ENCODE measurements at regions of chr2 and their contacts with region 1.

Region 1: GRCh38 chr2:45711224-45711623 is 59.7 kb downstream of the PRKCE start:
- DNase-seq: no peak
- ATAC-seq: no peak
- H3K4me3 ChIP-seq: no peak overlapping the region
- H3K4me3 Mint-ChIP-seq: no peak overlapping the region
- H3K27ac ChIP-seq: no peak overlapping the region
- H3K27ac Mint-ChIP-seq: no peak overlapping the region
- H3K4me1 ChIP-seq: no peaks in the 10 kb centered on the region
- H3K4me1 Mint-ChIP-seq: peaks cover 0 to 12% (median 10%) of the 10 kb centered on the region in 3 donors
- H3K27me3 ChIP-seq: no peaks in the 10 kb centered on the region
- H3K27me3 Mint-ChIP-seq: no peaks in the 10 kb centered on the region

Region 2: DNA sequence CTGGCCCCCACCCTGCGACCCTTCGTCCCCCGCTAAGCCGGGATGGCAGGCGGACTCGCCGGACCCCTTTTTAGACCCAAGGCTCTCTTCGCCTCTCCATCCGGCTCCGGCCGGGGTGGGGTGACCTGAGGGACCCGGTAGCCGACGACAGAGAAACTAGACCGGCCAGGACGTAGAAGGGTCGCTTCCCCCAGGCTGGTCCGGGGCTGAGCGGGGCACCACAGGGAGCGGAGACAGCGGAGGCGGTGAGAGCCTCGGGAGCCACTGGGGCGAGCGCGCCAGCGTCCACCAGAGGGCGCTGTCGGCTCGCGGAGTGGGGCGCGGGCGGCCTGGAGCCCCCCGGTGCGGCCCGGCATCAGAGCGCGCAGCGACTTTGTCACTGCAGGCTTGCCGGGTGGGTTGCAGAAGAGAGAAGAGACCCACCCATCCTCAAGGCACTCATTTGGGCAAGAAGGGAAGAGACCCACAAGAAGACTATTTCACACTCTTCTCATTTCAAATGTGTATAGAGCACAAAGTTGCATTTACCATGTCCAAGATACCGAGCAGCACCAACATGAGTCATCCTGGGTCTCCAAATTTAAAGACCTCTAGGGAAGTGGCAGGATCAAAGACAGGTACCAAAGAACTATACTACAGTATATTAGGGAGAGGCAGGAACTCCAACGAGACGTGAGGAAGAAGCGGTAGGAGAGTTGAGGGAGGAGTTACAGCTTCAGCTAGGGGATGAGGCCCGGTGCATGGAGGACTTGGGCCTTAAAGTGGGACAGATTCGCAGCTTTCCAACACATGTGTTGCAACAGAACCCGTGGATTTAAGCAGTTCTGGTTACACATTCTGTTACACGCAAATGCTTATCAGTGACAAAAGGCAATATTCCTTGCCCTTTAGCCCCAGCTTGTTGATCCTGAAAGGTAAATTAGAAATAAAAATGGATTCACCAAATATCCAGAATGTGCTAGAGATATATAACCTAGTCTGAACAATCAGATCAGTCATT is 67.4 kb before region 1 on chr2:
- CTCF ChIA-PET with region 1: no interaction called
- POLR2A ChIA-PET with region 1: no interaction called
- DNase-seq: peak in 34 of 35 experiments; percentile 20 to 86 (median 66)
- ATAC-seq: peak; percentile 95 to 99 (median 98)
- H3K4me3 ChIP-seq: peak overlapping the region in 1 of 2 donors; percentile 45
- H3K4me3 Mint-ChIP-seq: peak overlapping the region; percentile 36 to 64 (median 46)
- H3K27ac ChIP-seq: no peak overlapping the region
- H3K27ac Mint-ChIP-seq: peak overlapping the region in 1 of 2 donors; percentile 31
- H3K4me1 ChIP-seq: peaks cover 0 to 11% of the 10 kb centered on the region in 2 experiments
- H3K4me1 Mint-ChIP-seq: peaks cover 8 to 16% (median 10%) of the 10 kb centered on the region in 3 donors
- H3K27me3 ChIP-seq: peaks cover 0 to 29% of the 10 kb centered on the region in 2 experiments
- H3K27me3 Mint-ChIP-seq: peaks cover 17 to 20% of the 10 kb centered on the region in 2 donors

Region 3: GRCh38 chr2:45726188-45726587 is 15.0 kb after region 1 on chr2:
- CTCF ChIA-PET with region 1: no interaction called
- POLR2A ChIA-PET with region 1: interaction called in 1 of 2 experiments, 21 read pairs
- DNase-seq: no peak
- ATAC-seq: no peak
- H3K4me3 ChIP-seq: no peak overlapping the region
- H3K4me3 Mint-ChIP-seq: no peak overlapping the region
- H3K27ac ChIP-seq: no peak overlapping the region
- H3K27ac Mint-ChIP-seq: no peak overlapping the region
- H3K4me1 ChIP-seq: no peaks in the 10 kb centered on the region
- H3K4me1 Mint-ChIP-seq: peaks cover 9 to 41% (median 13%) of the 10 kb centered on the region in 3 donors
- H3K27me3 ChIP-seq: no peaks in the 10 kb centered on the region
- H3K27me3 Mint-ChIP-seq: no peaks in the 10 kb centered on the region